Heart right ventricle (tissue), 16 donors: ENCODE measurements at regions of chr16 and their contacts with region 1.

Region 1: GRCh38 chr16:77171745-77172635 is 19.0 kb upstream of the MON1B start:
- DNase-seq: peak in 1 of 2 donors; percentile 44
- ATAC-seq: peak in 7 of 8 donors; percentile 42 to 68 (median 63)
- H3K4me3 ChIP-seq: no peak overlapping the region
- H3K27ac ChIP-seq: no peak overlapping the region
- H3K4me1 ChIP-seq: peaks cover 0 to 5% (median 0%) of the 10 kb centered on the region in 9 donors
- H3K27me3 ChIP-seq: peaks cover 0 to 22% (median 4%) of the 10 kb centered on the region in 7 donors
- CTCF ChIP-seq: peak; percentile 52 to 86 (median 74)

Region 2: GRCh38 chr16:75789237-75789636 is 1382.8 kb before region 1 on chr16:
- intact Hi-C with region 1: loop called (anchors 2 to 5 kb)
- DNase-seq: peak in 1 of 2 donors; percentile 9
- ATAC-seq: peak in 1 of 8 donors; percentile 9
- H3K4me3 ChIP-seq: no peak overlapping the region
- H3K27ac ChIP-seq: no peak overlapping the region
- H3K4me1 ChIP-seq: no peaks in the 10 kb centered on the region
- H3K27me3 ChIP-seq: peaks cover 0 to 17% (median 7%) of the 10 kb centered on the region in 7 donors
- CTCF ChIP-seq: peak; percentile 65 to 90 (median 84)

Region 3: DNA sequence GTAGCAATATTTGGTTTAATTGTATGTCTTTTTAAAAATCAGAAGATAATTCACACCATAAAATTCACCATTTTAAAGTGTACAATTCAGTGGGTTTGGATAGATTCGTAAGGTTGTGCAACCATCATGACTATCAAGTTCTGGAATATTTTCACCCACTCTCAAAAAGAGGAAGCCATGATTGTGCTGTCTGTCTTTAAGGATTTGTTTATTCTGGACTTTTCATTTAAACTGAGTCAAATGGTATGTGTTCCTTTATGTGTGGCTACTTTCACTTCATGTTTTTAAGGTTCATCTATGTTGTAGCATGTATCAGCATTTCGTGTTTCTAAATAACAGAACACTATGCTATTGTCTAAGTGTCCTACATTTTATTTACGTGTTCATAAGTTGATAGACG is 1377.6 kb before region 1 on chr16:
- intact Hi-C with region 1: loop called (anchors 2 to 5 kb)
- DNase-seq: no peak
- ATAC-seq: no peak
- H3K4me3 ChIP-seq: no peak overlapping the region
- H3K27ac ChIP-seq: no peak overlapping the region
- H3K4me1 ChIP-seq: no peaks in the 10 kb centered on the region
- H3K27me3 ChIP-seq: no peaks in the 10 kb centered on the region
- CTCF ChIP-seq: no peak

Region 4: GRCh38 chr16:76278980-76279379 is 893.0 kb before region 1 on chr16:
- intact Hi-C with region 1: loop called in 1 of 10 experiments (anchors 10 kb)
- DNase-seq: no peak
- ATAC-seq: no peak
- H3K4me3 ChIP-seq: no peak overlapping the region
- H3K27ac ChIP-seq: no peak overlapping the region
- H3K4me1 ChIP-seq: no peaks in the 10 kb centered on the region
- H3K27me3 ChIP-seq: peaks cover 0 to 25% (median 5%) of the 10 kb centered on the region in 7 donors
- CTCF ChIP-seq: peak in 6 of 9 donors; percentile 6 to 33 (median 18)

Region 5: DNA sequence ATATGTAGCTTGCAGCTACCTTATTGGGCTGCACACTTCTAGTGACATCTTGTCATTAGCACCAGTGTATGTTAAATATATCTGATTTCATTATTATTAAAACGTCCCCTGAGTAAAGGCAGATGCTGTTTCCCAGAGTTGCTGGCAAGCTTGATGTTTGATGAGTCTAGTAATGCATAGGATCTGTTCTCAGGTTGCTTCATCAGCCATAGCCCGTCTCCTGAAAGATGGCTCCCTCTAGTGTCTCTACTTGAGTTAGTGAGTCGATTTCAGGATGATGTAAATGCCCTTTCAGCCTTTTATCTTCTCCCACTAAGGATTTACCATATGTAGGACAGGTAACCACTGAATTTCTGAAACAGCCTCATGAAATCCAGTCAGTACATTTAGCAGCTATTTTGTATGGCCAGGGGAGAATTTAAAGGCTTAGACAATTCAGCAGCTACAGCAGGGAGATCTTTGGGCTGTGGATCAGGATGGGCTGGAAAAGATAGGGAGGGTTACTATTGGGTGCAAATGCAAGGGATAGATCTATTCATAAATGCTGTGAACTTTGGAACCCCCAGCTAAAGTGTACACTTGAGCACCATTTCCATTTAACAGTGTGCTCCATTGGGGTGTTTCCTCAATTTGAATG is 518.5 kb before region 1 on chr16:
- intact Hi-C with region 1: loop called in 1 of 10 experiments (anchors 10 kb)
- DNase-seq: no peak
- ATAC-seq: no peak
- H3K4me3 ChIP-seq: no peak overlapping the region
- H3K27ac ChIP-seq: no peak overlapping the region
- H3K4me1 ChIP-seq: no peaks in the 10 kb centered on the region
- H3K27me3 ChIP-seq: peaks cover 0 to 5% (median 0%) of the 10 kb centered on the region in 7 donors
- CTCF ChIP-seq: peak in 7 of 9 donors; percentile 22 to 49 (median 44)

Region 6: GRCh38 chr16:77062878-77063671 is 108.9 kb before region 1 on chr16:
- intact Hi-C with region 1: loop called in 1 of 10 experiments (anchors 10 kb)
- DNase-seq: no peak
- ATAC-seq: peak in 7 of 8 donors; percentile 21 to 72 (median 52)
- H3K4me3 ChIP-seq: no peak overlapping the region
- H3K27ac ChIP-seq: peak overlapping the region in 3 of 10 donors; percentile 2 to 23 (median 19)
- H3K4me1 ChIP-seq: peaks cover 0 to 52% (median 20%) of the 10 kb centered on the region in 9 donors
- H3K27me3 ChIP-seq: no peaks in the 10 kb centered on the region
- CTCF ChIP-seq: peak in 2 of 9 donors; percentile 13 to 31

Region 7: DNA sequence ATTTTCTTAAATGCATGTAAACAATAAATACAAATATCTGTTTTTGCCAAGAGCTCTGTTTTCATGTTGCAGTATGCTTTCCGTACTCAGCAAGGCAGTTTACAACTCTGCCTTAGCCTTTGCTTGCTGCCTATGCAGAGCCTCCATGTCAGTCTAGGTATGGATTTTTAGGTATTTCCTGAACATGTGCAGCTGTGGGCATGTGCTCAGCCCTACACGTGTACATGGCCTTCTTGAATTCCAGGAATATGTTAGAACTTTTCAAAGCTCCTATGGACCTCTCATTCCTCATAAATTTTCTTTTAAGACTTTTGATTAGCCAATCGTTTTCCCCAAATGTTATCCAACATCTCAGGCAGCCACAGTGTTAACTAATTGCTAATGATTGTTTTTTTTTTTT is 91.0 kb after region 1 on chr16:
- intact Hi-C with region 1: no loop called
- DNase-seq: no peak
- ATAC-seq: no peak
- H3K4me3 ChIP-seq: no peak overlapping the region
- H3K27ac ChIP-seq: no peak overlapping the region
- H3K4me1 ChIP-seq: no peaks in the 10 kb centered on the region
- H3K27me3 ChIP-seq: no peaks in the 10 kb centered on the region
- CTCF ChIP-seq: no peak